AG04450 (cell line): ENCODE measurements at regions of chr16 and their contacts with region 1.

Region 1: DNA sequence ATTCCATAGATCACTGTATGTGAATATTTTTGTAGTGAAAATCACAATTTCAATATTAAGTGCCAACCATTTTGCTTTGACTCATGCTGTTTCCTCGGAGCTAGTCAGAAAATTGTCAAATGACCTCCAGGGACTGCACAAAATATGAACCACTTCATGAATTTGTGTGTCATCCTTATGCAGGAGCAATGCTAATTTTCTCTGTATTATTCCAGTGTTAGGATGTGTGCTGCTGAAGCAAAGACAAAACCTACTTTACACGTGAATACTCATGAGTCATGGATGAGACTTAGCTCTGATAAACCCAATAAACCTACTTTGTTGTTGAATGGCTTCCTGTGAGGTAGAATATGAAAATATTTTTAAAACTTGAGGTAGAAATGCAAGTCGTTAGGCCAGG is 65.2 kb downstream of the SHCBP1 start:
- DNase-seq: no peak
- H3K4me3 ChIP-seq: no peak overlapping the region
- H3K27ac ChIP-seq: no peak overlapping the region
- H3K27me3 ChIP-seq: no peaks in the 10 kb centered on the region
- CTCF ChIP-seq: no peak

Region 2: DNA sequence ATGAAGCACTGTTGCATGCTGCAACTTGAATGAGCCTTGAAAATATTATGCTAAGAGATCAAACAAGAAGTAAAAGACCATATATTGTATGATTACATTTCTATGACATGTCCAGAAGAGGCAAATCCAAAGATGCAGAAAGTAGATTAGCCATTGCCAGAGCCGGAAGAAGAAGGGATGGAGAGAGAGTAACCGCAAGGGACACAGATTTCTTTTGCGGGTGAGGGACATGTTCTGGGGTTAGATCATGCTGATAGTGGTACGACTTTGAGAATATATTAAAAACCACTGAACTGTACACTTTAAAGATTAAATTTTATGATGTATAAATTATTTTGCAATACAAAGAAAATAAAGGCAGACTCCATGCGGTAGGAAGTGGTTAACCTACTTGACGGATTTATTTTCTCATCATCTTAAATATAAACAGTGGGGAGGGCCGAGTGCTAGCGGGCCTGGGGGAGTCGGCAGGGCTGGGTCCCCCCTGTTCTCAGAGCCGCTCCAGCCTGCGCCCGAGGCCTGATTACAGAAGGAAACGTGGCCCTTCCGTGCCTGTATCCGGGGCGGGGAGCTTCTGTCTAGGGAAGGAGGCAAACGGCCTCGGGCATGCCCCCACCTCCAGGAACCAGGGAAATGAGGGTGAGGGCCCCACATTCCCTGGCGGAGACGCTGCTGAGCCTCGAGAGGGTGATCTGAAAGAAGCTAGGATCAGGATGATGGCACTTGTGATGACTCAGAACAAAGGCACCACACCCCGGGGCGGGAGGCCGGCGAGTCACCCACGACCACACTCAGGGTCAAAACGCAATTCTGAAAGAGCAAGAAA is 17.3 kb after region 1 on chr16:
- CTCF ChIA-PET with region 1: interaction called, 13 read pairs
- POLR2A ChIA-PET with region 1: no interaction called
- DNase-seq: no peak
- H3K4me3 ChIP-seq: no peak overlapping the region
- H3K27ac ChIP-seq: peak overlapping the region; percentile 39
- H3K27me3 ChIP-seq: no peaks in the 10 kb centered on the region
- CTCF ChIP-seq: no peak

Region 3: DNA sequence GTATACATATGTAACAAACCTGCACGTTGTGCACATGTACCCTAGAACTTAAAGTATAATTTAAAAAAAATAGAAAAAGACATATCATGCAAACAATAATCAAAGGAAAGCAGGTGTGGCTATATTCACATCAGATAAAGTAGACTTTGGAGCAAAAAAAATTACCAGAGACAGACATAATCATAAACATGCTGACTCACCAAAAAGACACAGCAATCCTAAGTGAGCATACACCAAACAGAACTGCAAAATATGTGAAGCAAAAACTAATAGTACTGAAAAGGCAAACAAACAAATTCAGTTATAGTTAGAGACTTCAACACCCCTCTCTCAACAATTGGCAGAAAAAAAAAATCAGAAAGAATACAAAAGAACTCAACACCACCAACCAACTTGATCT is 35.3 kb after region 1 on chr16:
- CTCF ChIA-PET with region 1: interaction called, 10 read pairs
- POLR2A ChIA-PET with region 1: no interaction called
- DNase-seq: no peak
- H3K4me3 ChIP-seq: no peak overlapping the region
- H3K27ac ChIP-seq: no peak overlapping the region
- H3K27me3 ChIP-seq: no peaks in the 10 kb centered on the region
- CTCF ChIP-seq: no peak

Region 4: GRCh38 chr16:46607529-46607928 is 51.6 kb after region 1 on chr16:
- CTCF ChIA-PET with region 1: interaction called, 304 read pairs
- POLR2A ChIA-PET with region 1: no interaction called
- DNase-seq: peak; percentile 29
- H3K4me3 ChIP-seq: no peak overlapping the region
- H3K27ac ChIP-seq: no peak overlapping the region
- H3K27me3 ChIP-seq: no peaks in the 10 kb centered on the region
- CTCF ChIP-seq: peak; percentile 52

Region 5: DNA sequence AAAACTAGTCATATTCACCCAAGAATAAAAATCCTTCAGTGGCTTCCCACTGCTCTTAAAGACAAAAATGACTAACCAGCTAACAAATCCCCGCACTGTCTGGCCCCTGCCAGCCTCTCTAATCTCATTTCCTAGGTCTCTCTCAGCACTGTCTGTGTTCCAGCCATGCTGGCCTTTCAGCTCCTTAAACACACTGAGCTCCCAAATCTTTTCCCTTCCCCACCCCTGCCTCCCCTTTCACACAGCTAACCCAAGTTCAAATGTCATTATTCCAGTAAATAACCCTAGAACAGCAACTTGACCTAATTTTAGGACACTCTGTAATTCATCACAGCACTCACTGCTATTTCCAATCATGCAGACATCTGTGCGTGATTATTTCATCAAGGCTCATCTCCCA is 57.4 kb after region 1 on chr16:
- CTCF ChIA-PET with region 1: interaction called, 304 read pairs
- POLR2A ChIA-PET with region 1: no interaction called
- DNase-seq: no peak
- H3K4me3 ChIP-seq: no peak overlapping the region
- H3K27ac ChIP-seq: peak overlapping the region; percentile 21
- H3K27me3 ChIP-seq: no peaks in the 10 kb centered on the region
- CTCF ChIP-seq: no peak